CD14-positive monocyte (primary cell): ENCODE measurements at regions of chr9 and their contacts with region 1.

Region 1: DNA sequence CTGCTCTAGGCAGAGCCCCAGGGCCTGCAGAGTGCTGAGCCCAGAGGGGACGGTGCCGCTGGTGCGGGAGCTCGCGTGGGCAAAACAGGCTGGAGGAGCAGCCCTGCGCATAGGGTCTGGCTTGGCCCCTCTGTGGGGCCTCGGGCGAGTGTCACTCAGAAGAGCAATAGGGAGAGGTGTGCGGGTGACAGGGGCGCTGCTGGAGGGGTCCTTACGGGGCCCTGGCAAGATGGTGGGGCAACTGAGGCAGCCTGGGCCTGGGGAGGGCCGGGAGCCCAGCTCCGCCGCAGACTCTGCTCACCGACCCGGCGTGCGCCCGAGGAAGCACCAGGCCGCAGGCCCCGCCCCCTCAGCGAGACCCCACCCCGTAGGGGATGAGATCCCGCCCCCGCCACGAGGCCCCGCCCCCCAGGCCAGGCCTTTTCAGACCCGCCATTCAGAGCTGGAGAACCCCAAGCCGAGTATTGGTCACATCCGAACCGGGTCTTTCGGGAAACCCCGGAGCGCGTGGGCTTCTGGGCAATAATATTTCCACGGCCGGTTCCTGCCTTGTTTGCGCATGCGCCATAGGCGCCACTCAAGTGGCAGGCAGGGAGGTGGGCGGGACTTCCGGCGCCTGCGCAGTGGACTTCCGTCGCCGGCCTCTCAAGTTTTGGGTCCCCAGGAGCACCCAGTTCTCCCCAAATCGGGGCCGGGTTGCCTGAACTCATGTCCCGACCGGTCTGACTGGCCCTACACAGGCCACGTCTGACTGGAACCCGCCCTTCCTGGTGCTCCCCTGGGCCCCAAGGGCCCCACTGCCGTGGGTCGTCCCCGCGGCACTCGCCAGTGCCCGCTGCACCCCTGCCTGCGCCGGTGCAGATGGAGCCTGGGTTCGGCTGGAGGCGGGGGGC is 1.3 kb upstream of the RNF208 start:
- DNase-seq: peak; percentile 98 to 99 (median 99)
- H3K4me3 ChIP-seq: peak overlapping the region; percentile 70 to 92 (median 73)
- H3K4me3 Mint-ChIP-seq: peak overlapping the region; percentile 90 to 93
- H3K27ac ChIP-seq: peak overlapping the region; percentile 49 to 90
- H3K27ac Mint-ChIP-seq: peak overlapping the region; percentile 68 to 90 (median 82)
- H3K4me1 ChIP-seq: peaks cover 33 to 44% of the 10 kb centered on the region in 2 donors
- H3K4me1 Mint-ChIP-seq: peaks cover 25% of the 10 kb centered on the region
- H3K27me3 ChIP-seq: peaks cover 0 to 22% of the 10 kb centered on the region in 2 donors
- H3K27me3 Mint-ChIP-seq: peaks cover 8 to 33% (median 13%) of the 10 kb centered on the region in 3 donors
- CTCF ChIP-seq: no peak

Region 2: DNA sequence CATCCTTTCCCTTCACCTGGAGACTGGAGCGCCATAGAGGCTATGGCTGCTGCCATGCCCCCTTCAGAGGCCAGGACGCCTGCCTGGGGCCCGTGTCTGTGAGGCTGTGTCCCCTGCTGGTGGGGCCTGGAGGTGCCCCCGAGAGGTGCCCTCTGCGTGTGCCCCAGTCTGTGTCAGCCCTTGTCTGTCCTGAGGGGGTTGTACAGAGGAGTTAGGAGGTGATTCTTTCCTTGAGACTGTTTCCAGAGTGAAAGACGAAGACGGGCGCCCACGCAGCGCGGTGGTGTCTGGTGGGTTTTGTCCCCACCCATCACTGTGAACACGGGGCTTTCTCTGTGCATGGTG is 312.5 kb before region 1 on chr9:
- intact Hi-C with region 1: no loop called
- DNase-seq: no peak
- H3K4me3 ChIP-seq: no peak overlapping the region
- H3K4me3 Mint-ChIP-seq: no peak overlapping the region
- H3K27ac ChIP-seq: no peak overlapping the region
- H3K27ac Mint-ChIP-seq: peak overlapping the region in 1 of 7 donors; percentile 32
- H3K4me1 ChIP-seq: no peaks in the 10 kb centered on the region
- H3K4me1 Mint-ChIP-seq: no peaks in the 10 kb centered on the region
- H3K27me3 ChIP-seq: no peaks in the 10 kb centered on the region
- H3K27me3 Mint-ChIP-seq: no peaks in the 10 kb centered on the region
- CTCF ChIP-seq: no peak

Region 3: GRCh38 chr9:137114610-137115391 is 108.5 kb before region 1 on chr9 and contains the start of gene DPP7:
- intact Hi-C with region 1: loop called in 1 of 2 experiments (anchors 5 kb)
- DNase-seq: peak; percentile 60 to 73 (median 69)
- H3K4me3 ChIP-seq: peak within 1 kb of the TSS; percentile 30 to 70 (median 34)
- H3K4me3 Mint-ChIP-seq: peak within 1 kb of the TSS; percentile 60
- H3K27ac ChIP-seq: no peak within 1 kb of the TSS
- H3K27ac Mint-ChIP-seq: peak within 1 kb of the TSS in 1 of 7 donors; percentile 68
- H3K4me1 ChIP-seq: peaks cover 15 to 17% of the 10 kb centered on the region in 2 donors
- H3K4me1 Mint-ChIP-seq: peaks cover 12% of the 10 kb centered on the region
- H3K27me3 ChIP-seq: peaks cover 0 to 3% of the 10 kb centered on the region in 2 donors
- H3K27me3 Mint-ChIP-seq: peaks cover 3 to 7% (median 6%) of the 10 kb centered on the region in 3 donors
- CTCF ChIP-seq: no peak
- polyA plus RNA-seq, gene DPP7: 68.3 to 287 (median 150) TPM

Region 4: GRCh38 chr9:137129456-137130175 is 93.7 kb before region 1 on chr9:
- intact Hi-C with region 1: loop called in 1 of 2 experiments (anchors 5 kb)
- DNase-seq: peak; percentile 84 to 88 (median 85)
- H3K4me3 ChIP-seq: peak overlapping the region; percentile 63 to 82 (median 67)
- H3K4me3 Mint-ChIP-seq: peak overlapping the region; percentile 80 to 87
- H3K27ac ChIP-seq: peak overlapping the region in 1 of 2 donors; percentile 31
- H3K27ac Mint-ChIP-seq: peak overlapping the region in 4 of 7 donors; percentile 8 to 42 (median 27)
- H3K4me1 ChIP-seq: peaks cover 33 to 42% of the 10 kb centered on the region in 2 donors
- H3K4me1 Mint-ChIP-seq: peaks cover 26% of the 10 kb centered on the region
- H3K27me3 ChIP-seq: peaks cover 0 to 25% of the 10 kb centered on the region in 2 donors
- H3K27me3 Mint-ChIP-seq: peaks cover 34 to 47% (median 38%) of the 10 kb centered on the region in 3 donors
- CTCF ChIP-seq: no peak

Region 5: DNA sequence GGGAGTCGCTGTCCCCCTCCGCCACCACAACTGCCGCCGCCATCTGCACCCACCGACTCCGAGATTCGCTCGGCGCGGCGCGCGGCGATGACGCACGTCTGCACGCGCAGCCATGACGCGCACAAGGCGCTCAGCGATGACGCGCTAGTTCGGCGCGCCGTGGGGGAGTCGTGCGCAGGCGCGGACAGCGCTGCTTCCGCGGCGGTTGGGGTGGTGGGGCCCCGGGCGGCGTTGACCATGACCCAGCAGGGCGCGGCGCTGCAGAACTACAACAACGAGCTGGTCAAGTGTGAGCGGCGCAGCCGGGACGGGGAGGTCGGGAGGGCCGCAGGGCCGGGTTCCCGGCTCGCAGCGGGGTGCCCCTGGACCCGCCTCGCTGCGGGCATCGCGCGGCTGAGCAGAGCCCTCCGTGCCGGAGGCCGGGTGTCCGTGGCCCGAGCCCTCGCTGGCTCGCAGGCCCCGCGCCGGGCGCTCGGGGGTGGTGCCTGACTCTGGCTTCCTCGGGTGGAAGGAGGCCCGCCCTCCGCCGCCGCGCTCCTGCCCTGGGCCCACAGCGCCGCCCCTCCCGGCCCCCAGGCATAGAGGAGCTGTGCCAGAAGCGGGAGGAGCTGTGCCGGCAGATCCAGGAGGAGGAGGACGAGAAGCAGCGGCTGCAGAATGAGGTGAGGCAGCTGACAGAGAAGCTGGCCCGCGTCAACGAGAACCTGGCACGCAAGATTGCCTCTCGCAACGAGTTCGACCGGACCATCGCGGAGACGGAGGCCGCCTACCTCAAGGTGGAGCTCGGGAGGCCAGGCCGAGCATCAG is 34.6 kb before region 1 on chr9 and contains the starts of genes ANAPC2 and SSNA1:
- intact Hi-C with region 1: loop called (anchors 1 kb)
- DNase-seq: peak; percentile 94 to 97 (median 95)
- H3K4me3 ChIP-seq: peak within 1 kb of the TSS; percentile 83 to 95 (median 92)
- H3K4me3 Mint-ChIP-seq: peak within 1 kb of the TSS; percentile 88 to 97
- H3K27ac ChIP-seq: peak within 1 kb of the TSS; percentile 83 to 96
- H3K27ac Mint-ChIP-seq: peak within 1 kb of the TSS; percentile 93 to 98 (median 96)
- H3K4me1 ChIP-seq: peaks cover 28 to 39% of the 10 kb centered on the region in 2 donors
- H3K4me1 Mint-ChIP-seq: peaks cover 32% of the 10 kb centered on the region
- H3K27me3 ChIP-seq: no peaks in the 10 kb centered on the region
- H3K27me3 Mint-ChIP-seq: no peaks in the 10 kb centered on the region
- CTCF ChIP-seq: peak; percentile 42
- polyA plus RNA-seq, gene ANAPC2: 1.9 to 76.8 (median 2.0) TPM
- polyA plus RNA-seq, gene SSNA1: 87.0 to 118 (median 98.3) TPM

Region 6: DNA sequence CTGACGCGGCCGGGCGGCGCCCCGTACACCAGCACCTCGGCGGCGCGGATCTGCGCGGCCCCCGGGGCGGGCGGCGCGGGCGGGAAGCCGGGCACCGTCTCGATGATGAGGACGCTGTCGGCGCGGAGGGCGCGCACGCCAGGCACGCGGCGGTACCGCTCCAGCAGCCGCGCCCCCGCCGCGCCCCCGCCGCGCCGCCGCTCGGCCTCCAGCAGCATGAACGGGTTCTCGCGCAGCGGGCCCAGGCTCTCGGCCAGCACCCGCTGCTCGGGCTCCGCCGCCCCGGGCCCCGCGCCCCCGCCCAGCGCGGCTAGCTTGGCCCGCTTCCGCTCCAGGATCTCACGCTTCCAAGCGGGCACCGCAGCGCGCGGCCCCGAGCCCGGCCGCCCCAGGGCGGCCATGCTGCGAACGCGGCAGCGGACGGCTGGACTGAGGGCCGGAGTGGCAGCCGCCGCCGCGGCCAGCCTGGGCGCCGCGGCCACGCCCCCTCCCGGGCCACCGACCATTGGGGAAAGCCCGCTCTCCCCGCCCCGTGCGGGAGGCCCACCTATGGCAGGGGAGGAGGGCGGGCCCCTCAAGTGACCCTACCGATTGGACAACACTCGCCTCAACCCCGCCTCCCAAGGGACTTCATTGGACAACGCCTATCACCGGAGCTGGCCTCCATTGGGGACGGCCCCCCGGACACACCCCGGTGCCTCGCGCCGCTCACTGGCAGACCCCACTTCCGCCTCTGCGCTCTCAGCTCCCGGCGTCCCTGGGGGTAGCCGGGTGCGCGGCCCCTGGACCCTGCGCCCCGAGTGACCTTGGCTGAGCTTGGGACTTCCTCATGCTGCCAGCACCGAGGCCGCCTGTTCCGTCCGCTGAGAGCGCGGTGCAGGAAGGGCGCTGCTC is 22.8 kb before region 1 on chr9 and contains the start of gene TPRN:
- intact Hi-C with region 1: loop called (anchors 1 to 2 kb)
- DNase-seq: peak; percentile 98 to 100 (median 99)
- H3K4me3 ChIP-seq: peak within 1 kb of the TSS; percentile 47 to 74 (median 68)
- H3K4me3 Mint-ChIP-seq: peak within 1 kb of the TSS; percentile 81 to 88
- H3K27ac ChIP-seq: peak within 1 kb of the TSS; percentile 77 to 89
- H3K27ac Mint-ChIP-seq: peak within 1 kb of the TSS; percentile 77 to 92 (median 89)
- H3K4me1 ChIP-seq: peaks cover 41 to 55% of the 10 kb centered on the region in 2 donors
- H3K4me1 Mint-ChIP-seq: peaks cover 43% of the 10 kb centered on the region
- H3K27me3 ChIP-seq: peaks cover 0 to 4% of the 10 kb centered on the region in 2 donors
- H3K27me3 Mint-ChIP-seq: peaks cover 0 to 4% (median 0%) of the 10 kb centered on the region in 3 donors
- CTCF ChIP-seq: no peak
- polyA plus RNA-seq, gene TPRN: 0.30 to 4.6 (median 0.46) TPM

Region 7: DNA sequence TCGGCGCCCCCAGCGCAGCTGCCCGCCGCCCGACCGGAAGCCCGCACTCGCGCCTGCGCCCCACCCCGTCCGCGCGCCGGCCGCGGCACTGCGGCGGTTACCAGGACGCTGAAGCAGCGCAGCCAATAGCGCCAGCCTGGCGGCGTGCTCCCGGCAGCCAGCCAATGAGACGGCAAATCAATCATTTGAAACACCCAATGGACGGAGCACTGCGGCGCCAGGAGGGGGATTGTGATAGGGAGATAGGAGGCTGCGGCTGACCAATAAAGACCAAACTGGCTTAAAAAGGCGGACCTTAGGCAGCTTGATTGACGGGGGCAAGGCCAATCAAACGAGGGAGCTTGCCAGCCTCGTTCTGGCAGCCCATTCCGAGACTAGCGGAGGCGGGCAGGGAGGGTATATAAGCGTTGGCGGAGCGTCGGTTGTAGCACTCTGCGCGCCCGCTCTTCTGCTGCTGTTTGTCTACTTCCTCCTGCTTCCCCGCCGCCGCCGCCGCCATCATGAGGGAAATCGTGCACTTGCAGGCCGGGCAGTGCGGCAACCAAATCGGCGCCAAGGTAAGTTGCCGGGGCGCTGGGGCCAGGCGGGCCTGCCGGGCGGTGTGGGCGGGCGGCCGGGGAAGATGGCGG is 17.7 kb after region 1 on chr9 and contains the start of gene TUBB4B:
- intact Hi-C with region 1: loop called in 1 of 2 experiments (anchors 1 kb)
- DNase-seq: peak; percentile 100
- H3K4me3 ChIP-seq: peak within 1 kb of the TSS; percentile 82 to 94 (median 90)
- H3K4me3 Mint-ChIP-seq: peak within 1 kb of the TSS; percentile 84 to 85
- H3K27ac ChIP-seq: peak within 1 kb of the TSS; percentile 68 to 94
- H3K27ac Mint-ChIP-seq: peak within 1 kb of the TSS; percentile 77 to 93 (median 90)
- H3K4me1 ChIP-seq: peaks cover 49 to 63% of the 10 kb centered on the region in 2 donors
- H3K4me1 Mint-ChIP-seq: peaks cover 47% of the 10 kb centered on the region
- H3K27me3 ChIP-seq: no peaks in the 10 kb centered on the region
- H3K27me3 Mint-ChIP-seq: peaks cover 1 to 3% (median 2%) of the 10 kb centered on the region in 3 donors
- CTCF ChIP-seq: no peak
- polyA plus RNA-seq, gene TUBB4B: 58.1 to 284 (median 70.8) TPM